ENCODE measurements at regions of chr21 and their contacts with region 1.

Region 1: DNA sequence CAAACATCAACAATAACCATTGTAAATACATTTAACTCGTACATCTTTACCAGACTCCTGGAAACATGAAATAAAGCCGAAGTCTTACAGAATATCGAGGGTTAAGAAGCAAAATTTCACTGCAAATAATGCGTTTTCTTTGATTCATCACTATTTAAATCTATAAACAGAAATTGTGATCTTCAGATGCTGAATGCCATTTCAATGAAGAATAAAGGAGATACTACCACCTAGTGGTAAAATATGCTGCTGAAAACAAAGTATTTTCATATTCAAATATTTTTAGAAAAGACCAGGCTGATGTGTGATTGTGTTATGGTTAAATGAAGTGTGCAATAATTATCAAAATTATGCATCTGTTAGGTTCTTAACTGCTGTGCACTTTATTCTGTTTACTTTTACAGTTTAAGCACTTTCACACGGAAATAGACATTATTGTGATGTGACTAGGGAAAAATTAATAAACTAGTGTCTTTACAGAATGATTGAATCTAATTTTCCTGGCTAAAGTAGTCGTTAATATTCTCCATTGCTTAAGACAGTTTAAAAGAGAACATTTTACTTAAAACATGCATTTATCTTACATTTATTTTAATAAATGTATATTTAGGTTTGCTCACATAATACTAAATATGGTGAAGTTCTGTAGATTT is 1093.1 kb downstream of the MRPL39 start:
- DNase-seq: no peak
- H3K4me3 Mint-ChIP-seq: no peak overlapping the region
- H3K27ac Mint-ChIP-seq: no peak overlapping the region
- H3K4me1 Mint-ChIP-seq: no peaks in the 10 kb centered on the region
- H3K27me3 Mint-ChIP-seq: no peaks in the 10 kb centered on the region

Region 2: GRCh38 chr21:23853796-23854379 is 660.3 kb before region 1 on chr21:
- CTCF ChIA-PET with region 1: interaction called, 3 read pairs
- intact Hi-C with region 1: loop called (anchors 1 kb)
- DNase-seq: peak; percentile 14
- H3K4me3 Mint-ChIP-seq: no peak overlapping the region
- H3K27ac Mint-ChIP-seq: no peak overlapping the region
- H3K4me1 Mint-ChIP-seq: peaks cover 6% of the 10 kb centered on the region
- H3K27me3 Mint-ChIP-seq: peaks cover 3% of the 10 kb centered on the region

Region 3: GRCh38 chr21:23968722-23969647 is 545.2 kb before region 1 on chr21:
- CTCF ChIA-PET with region 1: no interaction called
- intact Hi-C with region 1: loop called (anchors 10 kb)
- DNase-seq: peak; percentile 88
- H3K4me3 Mint-ChIP-seq: no peak overlapping the region
- H3K27ac Mint-ChIP-seq: peak overlapping the region; percentile 71
- H3K4me1 Mint-ChIP-seq: peaks cover 12% of the 10 kb centered on the region
- H3K27me3 Mint-ChIP-seq: no peaks in the 10 kb centered on the region

Region 4: DNA sequence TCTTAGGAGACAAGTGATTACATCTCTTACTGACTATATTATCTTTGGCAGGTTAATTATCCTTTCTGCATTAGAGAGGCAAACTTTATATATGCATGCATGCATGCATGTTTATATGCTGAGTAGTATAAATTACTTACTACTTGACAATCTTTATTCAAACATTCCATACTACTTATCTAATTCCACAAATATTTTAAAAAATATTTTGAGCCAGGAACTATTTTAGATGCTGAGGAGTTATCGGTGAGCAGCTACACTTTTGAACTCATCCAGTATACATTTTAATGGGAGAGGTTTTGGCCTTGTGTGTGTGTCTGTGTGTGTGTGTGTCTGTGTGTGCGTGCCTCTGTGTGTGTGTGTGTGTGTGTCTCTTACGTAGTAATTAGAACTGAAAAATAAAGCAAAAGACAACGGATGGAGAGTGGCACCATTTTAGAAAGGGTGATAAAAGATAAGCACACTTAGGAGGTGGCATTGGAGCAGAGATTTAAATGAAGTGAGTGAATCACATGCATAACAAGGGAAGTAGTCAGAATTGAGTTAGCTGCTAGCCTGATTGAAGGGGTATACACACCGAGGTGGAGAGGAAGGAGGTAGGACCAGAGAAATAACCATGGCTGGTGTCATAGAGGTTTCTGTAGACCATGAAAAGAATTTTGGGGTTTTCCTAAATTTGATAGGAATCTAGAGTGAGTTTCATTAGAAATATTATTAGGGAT is 395.3 kb before region 1 on chr21:
- CTCF ChIA-PET with region 1: no interaction called
- intact Hi-C with region 1: loop called (anchors 10 kb)
- DNase-seq: no peak
- H3K4me3 Mint-ChIP-seq: no peak overlapping the region
- H3K27ac Mint-ChIP-seq: no peak overlapping the region
- H3K4me1 Mint-ChIP-seq: no peaks in the 10 kb centered on the region
- H3K27me3 Mint-ChIP-seq: no peaks in the 10 kb centered on the region

Region 5: GRCh38 chr21:24375201-24375600 is 139.0 kb before region 1 on chr21:
- CTCF ChIA-PET with region 1: interaction called, 3 read pairs
- intact Hi-C with region 1: loop called (anchors 1 kb)
- DNase-seq: peak; percentile 46
- H3K4me3 Mint-ChIP-seq: no peak overlapping the region
- H3K27ac Mint-ChIP-seq: no peak overlapping the region
- H3K4me1 Mint-ChIP-seq: no peaks in the 10 kb centered on the region
- H3K27me3 Mint-ChIP-seq: no peaks in the 10 kb centered on the region

Region 6: DNA sequence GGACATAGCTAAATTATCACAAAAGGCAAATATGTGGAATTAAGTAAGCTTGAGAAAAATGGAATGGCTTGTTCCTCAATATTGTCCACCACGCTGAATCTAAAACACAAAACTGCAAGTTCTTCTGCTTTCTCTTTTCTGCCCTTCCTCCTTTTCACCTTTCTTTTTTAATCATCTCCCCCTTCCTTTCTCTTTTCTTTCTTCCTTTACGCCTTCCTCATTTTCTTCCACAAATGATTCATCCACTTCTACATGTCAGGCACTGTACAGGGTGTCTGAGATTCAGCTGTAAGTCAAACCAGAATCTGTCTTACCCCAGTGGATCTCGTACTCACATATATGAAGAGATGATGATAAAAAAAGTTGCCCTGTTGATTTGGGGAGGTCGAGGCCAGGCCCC is 89.4 kb before region 1 on chr21:
- CTCF ChIA-PET with region 1: no interaction called
- intact Hi-C with region 1: no loop called
- DNase-seq: no peak
- H3K4me3 Mint-ChIP-seq: no peak overlapping the region
- H3K27ac Mint-ChIP-seq: no peak overlapping the region
- H3K4me1 Mint-ChIP-seq: peaks cover 4% of the 10 kb centered on the region
- H3K27me3 Mint-ChIP-seq: no peaks in the 10 kb centered on the region

Region 7: GRCh38 chr21:24759348-24760118 is 245.3 kb after region 1 on chr21:
- CTCF ChIA-PET with region 1: no interaction called
- intact Hi-C with region 1: no loop called
- DNase-seq: no peak
- H3K4me3 Mint-ChIP-seq: no peak overlapping the region
- H3K27ac Mint-ChIP-seq: no peak overlapping the region
- H3K4me1 Mint-ChIP-seq: no peaks in the 10 kb centered on the region
- H3K27me3 Mint-ChIP-seq: no peaks in the 10 kb centered on the region